CD8-positive, alpha-beta T cell (primary cell): ENCODE measurements at regions of chr2 and their contacts with region 1.

Region 1: DNA sequence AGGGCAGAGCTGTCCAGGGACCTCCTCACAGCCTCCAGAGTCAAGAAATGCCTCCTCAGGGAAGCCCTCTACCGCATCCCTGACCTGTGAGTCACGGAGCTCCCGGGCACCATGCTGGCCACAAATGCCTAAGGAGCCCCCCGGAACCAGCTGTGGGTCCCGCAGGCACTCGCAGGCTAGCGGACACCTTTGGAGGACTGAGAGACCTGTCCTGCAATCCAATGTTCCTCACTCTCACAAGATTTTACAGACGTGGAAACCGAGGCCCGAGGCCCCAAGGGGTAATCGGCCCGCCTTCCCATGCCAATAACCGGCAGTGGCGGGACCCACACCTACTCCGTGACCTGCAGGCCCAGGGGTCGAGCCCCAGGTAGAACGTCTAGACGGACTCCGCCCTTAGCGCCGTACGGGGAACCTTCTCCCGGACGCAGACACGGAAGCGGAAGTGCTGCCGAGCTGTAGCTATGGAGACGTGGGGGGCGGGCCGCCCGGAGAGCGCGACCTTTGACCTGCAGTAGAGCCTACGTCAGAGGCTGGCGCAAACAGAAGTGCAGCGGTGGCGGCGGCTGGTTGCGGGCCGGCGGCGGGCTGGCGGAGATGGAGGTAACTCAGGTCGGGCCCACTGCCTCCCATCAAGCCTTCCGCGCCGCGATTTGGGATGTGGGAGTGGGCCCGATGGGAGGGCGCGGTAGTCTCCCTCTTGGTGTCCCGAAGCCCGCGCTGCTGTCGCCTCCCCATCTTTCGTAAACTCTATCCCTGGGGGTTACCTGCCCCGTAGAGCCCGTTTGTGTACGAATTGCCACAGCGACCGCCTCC is at the start of gene GCC2:
- DNase-seq: peak; percentile 94 to 98 (median 97)
- ATAC-seq: peak; percentile 90
- H3K4me3 ChIP-seq: peak within 1 kb of the TSS; percentile 97
- H3K4me3 Mint-ChIP-seq: peak within 1 kb of the TSS; percentile 97
- H3K27ac ChIP-seq: peak within 1 kb of the TSS; percentile 98 to 99
- H3K27ac Mint-ChIP-seq: peak within 1 kb of the TSS; percentile 99
- H3K4me1 ChIP-seq: peaks cover 18% of the 10 kb centered on the region
- H3K4me1 Mint-ChIP-seq: peaks cover 41% of the 10 kb centered on the region
- H3K27me3 ChIP-seq: no peaks in the 10 kb centered on the region
- H3K27me3 Mint-ChIP-seq: no peaks in the 10 kb centered on the region
- CTCF ChIP-seq: no peak
- total RNA-seq, gene GCC2: 147 to 157 TPM

Region 2: GRCh38 chr2:106868275-106868674 is 1580.6 kb before region 1 on chr2:
- CTCF ChIA-PET with region 1: no interaction called
- POLR2A ChIA-PET with region 1: no interaction called
- intact Hi-C with region 1: no loop called
- DNase-seq: no peak
- ATAC-seq: no peak
- H3K4me3 ChIP-seq: no peak overlapping the region
- H3K4me3 Mint-ChIP-seq: no peak overlapping the region
- H3K27ac ChIP-seq: no peak overlapping the region
- H3K27ac Mint-ChIP-seq: no peak overlapping the region
- H3K4me1 ChIP-seq: no peaks in the 10 kb centered on the region
- H3K4me1 Mint-ChIP-seq: no peaks in the 10 kb centered on the region
- H3K27me3 ChIP-seq: no peaks in the 10 kb centered on the region
- H3K27me3 Mint-ChIP-seq: no peaks in the 10 kb centered on the region
- CTCF ChIP-seq: no peak

Region 3: DNA sequence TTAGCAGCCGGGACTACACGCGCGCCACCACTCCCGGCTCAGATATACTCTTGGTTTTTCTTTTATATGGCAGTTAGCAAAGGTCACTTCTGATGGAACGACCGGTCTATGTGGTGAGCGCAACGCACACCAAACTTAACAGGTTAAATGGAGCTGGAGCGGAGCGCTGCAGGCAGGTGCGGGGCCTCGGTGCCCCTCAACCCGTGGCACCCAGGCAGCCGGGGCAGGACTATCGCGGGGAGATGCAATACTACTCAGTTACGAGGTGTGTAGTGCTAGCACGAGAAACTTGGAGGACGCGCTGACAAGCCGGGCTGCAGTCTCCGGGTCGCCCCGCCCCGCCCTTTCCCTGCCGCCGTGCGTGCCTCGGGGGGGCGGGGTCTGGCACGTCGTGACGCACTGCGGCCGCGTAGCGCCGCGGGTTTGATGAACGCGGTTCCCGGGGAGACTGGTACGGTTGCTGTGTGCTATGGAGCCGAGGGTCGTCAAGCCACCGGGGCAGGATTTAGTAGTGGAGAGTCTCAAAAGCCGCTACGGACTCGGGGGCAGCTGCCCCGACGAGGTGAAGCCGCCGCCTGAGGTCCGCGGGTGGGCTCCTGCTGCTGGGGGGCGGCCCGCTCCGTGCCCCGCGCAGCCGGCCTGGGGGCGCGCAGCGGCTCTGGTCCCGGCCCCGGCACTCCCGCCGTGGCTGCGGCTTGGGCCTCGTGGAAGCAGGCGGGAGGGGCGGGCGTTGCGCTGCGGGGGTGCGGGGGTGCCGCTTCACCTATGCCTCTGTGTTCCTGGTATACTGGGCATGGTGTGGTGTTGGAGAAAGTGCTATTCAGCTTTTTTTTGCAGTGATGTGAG is 337.7 kb after region 1 on chr2 and contains the start of gene CCDC138:
- CTCF ChIA-PET with region 1: no interaction called
- POLR2A ChIA-PET with region 1: no interaction called
- intact Hi-C with region 1: loop called in 1 of 2 experiments (anchors 1 kb)
- DNase-seq: peak; percentile 85 to 95 (median 93)
- ATAC-seq: peak; percentile 97
- H3K4me3 ChIP-seq: peak within 1 kb of the TSS; percentile 76 to 90
- H3K4me3 Mint-ChIP-seq: peak within 1 kb of the TSS; percentile 99
- H3K27ac ChIP-seq: peak within 1 kb of the TSS; percentile 77 to 83
- H3K27ac Mint-ChIP-seq: peak within 1 kb of the TSS; percentile 97
- H3K4me1 ChIP-seq: peaks cover 10% of the 10 kb centered on the region
- H3K4me1 Mint-ChIP-seq: peaks cover 22% of the 10 kb centered on the region
- H3K27me3 ChIP-seq: no peaks in the 10 kb centered on the region
- H3K27me3 Mint-ChIP-seq: no peaks in the 10 kb centered on the region
- CTCF ChIP-seq: no peak
- total RNA-seq, gene CCDC138: 4.6 to 5.9 TPM